B cell (primary cell): ENCODE measurements at regions of chr5 and their contacts with region 1.

Region 1: GRCh38 chr5:79612667-79613198 is 492 bp downstream of the TENT2 start:
- DNase-seq: no peak
- ATAC-seq: no peak
- H3K4me3 ChIP-seq: peak overlapping the region; percentile 93 to 98 (median 96)
- H3K4me3 Mint-ChIP-seq: peak overlapping the region; percentile 95
- H3K27ac ChIP-seq: peak overlapping the region; percentile 95 to 99
- H3K27ac Mint-ChIP-seq: peak overlapping the region; percentile 96
- H3K4me1 ChIP-seq: peaks cover 16 to 21% of the 10 kb centered on the region in 2 donors
- H3K4me1 Mint-ChIP-seq: peaks cover 36% of the 10 kb centered on the region
- H3K27me3 ChIP-seq: no peaks in the 10 kb centered on the region
- H3K27me3 Mint-ChIP-seq: no peaks in the 10 kb centered on the region
- CTCF ChIP-seq: no peak

Region 2: GRCh38 chr5:77775790-77776553 is 1836.8 kb before region 1 on chr5 and contains the start of gene TBCA:
- CTCF ChIA-PET with region 1: no interaction called
- POLR2A ChIA-PET with region 1: no interaction called
- intact Hi-C with region 1: loop called (anchors 5 kb)
- DNase-seq: peak; percentile 98
- ATAC-seq: peak; percentile 85
- H3K4me3 ChIP-seq: peak within 1 kb of the TSS; percentile 55 to 96 (median 74)
- H3K4me3 Mint-ChIP-seq: peak within 1 kb of the TSS; percentile 90
- H3K27ac ChIP-seq: peak within 1 kb of the TSS; percentile 93 to 98
- H3K27ac Mint-ChIP-seq: peak within 1 kb of the TSS; percentile 98
- H3K4me1 ChIP-seq: peaks cover 19 to 22% of the 10 kb centered on the region in 2 donors
- H3K4me1 Mint-ChIP-seq: peaks cover 35% of the 10 kb centered on the region
- H3K27me3 ChIP-seq: no peaks in the 10 kb centered on the region
- H3K27me3 Mint-ChIP-seq: no peaks in the 10 kb centered on the region
- CTCF ChIP-seq: peak; percentile 42
- total RNA-seq, gene TBCA: 94.8 and 110 TPM in 2 replicates

Region 3: GRCh38 chr5:78359831-78360673 is 1252.7 kb before region 1 on chr5 and contains the start of gene SCAMP1:
- CTCF ChIA-PET with region 1: no interaction called
- POLR2A ChIA-PET with region 1: no interaction called
- intact Hi-C with region 1: loop called (anchors 2 kb)
- DNase-seq: peak; percentile 97
- ATAC-seq: peak; percentile 87
- H3K4me3 ChIP-seq: peak within 1 kb of the TSS; percentile 67 to 99 (median 88)
- H3K4me3 Mint-ChIP-seq: peak within 1 kb of the TSS; percentile 93
- H3K27ac ChIP-seq: peak within 1 kb of the TSS; percentile 81 to 85
- H3K27ac Mint-ChIP-seq: peak within 1 kb of the TSS; percentile 90
- H3K4me1 ChIP-seq: peaks cover 20 to 22% of the 10 kb centered on the region in 2 donors
- H3K4me1 Mint-ChIP-seq: peaks cover 37% of the 10 kb centered on the region
- H3K27me3 ChIP-seq: no peaks in the 10 kb centered on the region
- H3K27me3 Mint-ChIP-seq: no peaks in the 10 kb centered on the region
- CTCF ChIP-seq: peak; percentile 18
- total RNA-seq, gene SCAMP1: 18.4 and 25.4 TPM in 2 replicates

Region 4: GRCh38 chr5:79653843-79654242 is 41.1 kb after region 1 on chr5:
- CTCF ChIA-PET with region 1: no interaction called
- POLR2A ChIA-PET with region 1: no interaction called
- intact Hi-C with region 1: no loop called
- DNase-seq: no peak
- ATAC-seq: no peak
- H3K4me3 ChIP-seq: no peak overlapping the region
- H3K4me3 Mint-ChIP-seq: no peak overlapping the region
- H3K27ac ChIP-seq: no peak overlapping the region
- H3K27ac Mint-ChIP-seq: no peak overlapping the region
- H3K4me1 ChIP-seq: no peaks in the 10 kb centered on the region
- H3K4me1 Mint-ChIP-seq: no peaks in the 10 kb centered on the region
- H3K27me3 ChIP-seq: no peaks in the 10 kb centered on the region
- H3K27me3 Mint-ChIP-seq: no peaks in the 10 kb centered on the region
- CTCF ChIP-seq: no peak

Region 5: GRCh38 chr5:79990598-79991507 is 378.1 kb after region 1 on chr5 and contains the start of gene MTX3:
- CTCF ChIA-PET with region 1: no interaction called
- POLR2A ChIA-PET with region 1: no interaction called
- intact Hi-C with region 1: loop called (anchors 2 kb)
- DNase-seq: peak; percentile 89
- ATAC-seq: peak; percentile 96
- H3K4me3 ChIP-seq: peak within 1 kb of the TSS; percentile 71 to 90 (median 78)
- H3K4me3 Mint-ChIP-seq: peak within 1 kb of the TSS; percentile 81
- H3K27ac ChIP-seq: peak within 1 kb of the TSS; percentile 65 to 70
- H3K27ac Mint-ChIP-seq: peak within 1 kb of the TSS; percentile 91
- H3K4me1 ChIP-seq: peaks cover 16% of the 10 kb centered on the region in 2 donors
- H3K4me1 Mint-ChIP-seq: peaks cover 17% of the 10 kb centered on the region
- H3K27me3 ChIP-seq: no peaks in the 10 kb centered on the region
- H3K27me3 Mint-ChIP-seq: peaks cover 9% of the 10 kb centered on the region
- CTCF ChIP-seq: no peak
- total RNA-seq, gene MTX3: 21.0 and 22.0 TPM in 2 replicates

Region 6: DNA sequence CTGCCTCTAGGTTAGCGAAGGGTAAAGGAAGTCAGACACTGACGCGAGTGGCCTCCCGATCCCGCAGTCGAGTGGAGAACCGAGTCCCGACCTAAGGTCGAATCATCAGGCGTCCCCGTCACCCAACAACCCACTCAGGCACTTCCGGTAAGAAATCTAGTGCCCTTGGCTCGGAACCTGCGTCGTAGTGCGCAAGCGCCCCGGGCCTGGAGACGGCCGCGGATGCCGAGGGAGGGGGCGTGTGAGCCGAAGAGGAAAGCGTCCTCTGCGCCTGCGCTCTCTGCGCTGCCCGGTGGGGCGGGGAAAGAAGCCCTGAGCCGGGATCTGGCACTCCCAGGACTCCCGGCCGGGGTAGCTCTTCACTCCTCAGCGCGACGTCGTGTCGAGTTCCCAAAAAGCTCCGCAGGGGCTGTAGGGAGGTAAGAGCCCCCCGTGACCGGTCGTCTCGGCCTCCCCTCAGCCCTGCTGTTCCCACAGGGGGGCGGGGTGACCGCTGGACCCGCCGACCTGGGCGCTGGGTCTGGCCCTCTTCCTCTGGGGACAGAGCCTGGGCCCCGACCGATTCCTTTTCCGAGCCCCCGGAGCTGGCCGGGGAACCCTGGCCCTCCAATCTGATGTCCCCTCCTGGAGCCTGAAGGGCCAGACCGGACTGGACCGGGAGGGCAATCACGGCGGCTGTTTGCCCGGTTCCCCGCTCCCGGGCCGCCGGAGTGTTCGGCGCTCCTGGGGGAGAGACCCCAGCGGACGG is 795.2 kb after region 1 on chr5 and contains the start of gene ZFYVE16:
- CTCF ChIA-PET with region 1: no interaction called
- POLR2A ChIA-PET with region 1: no interaction called
- intact Hi-C with region 1: loop called (anchors 2 kb)
- DNase-seq: peak; percentile 98
- ATAC-seq: peak; percentile 84
- H3K4me3 ChIP-seq: peak within 1 kb of the TSS; percentile 87 to 99 (median 92)
- H3K4me3 Mint-ChIP-seq: peak within 1 kb of the TSS; percentile 97
- H3K27ac ChIP-seq: peak within 1 kb of the TSS; percentile 84 to 95
- H3K27ac Mint-ChIP-seq: peak within 1 kb of the TSS; percentile 99
- H3K4me1 ChIP-seq: peaks cover 13 to 17% of the 10 kb centered on the region in 2 donors
- H3K4me1 Mint-ChIP-seq: peaks cover 20% of the 10 kb centered on the region
- H3K27me3 ChIP-seq: no peaks in the 10 kb centered on the region
- H3K27me3 Mint-ChIP-seq: no peaks in the 10 kb centered on the region
- CTCF ChIP-seq: peak; percentile 18
- total RNA-seq, gene ZFYVE16: 38.3 and 44.4 TPM in 2 replicates

Region 7: GRCh38 chr5:80852331-80853245 is 1239.9 kb after region 1 on chr5:
- CTCF ChIA-PET with region 1: no interaction called
- POLR2A ChIA-PET with region 1: no interaction called
- intact Hi-C with region 1: no loop called
- DNase-seq: no peak
- ATAC-seq: no peak
- H3K4me3 ChIP-seq: no peak overlapping the region
- H3K4me3 Mint-ChIP-seq: no peak overlapping the region
- H3K27ac ChIP-seq: no peak overlapping the region
- H3K27ac Mint-ChIP-seq: no peak overlapping the region
- H3K4me1 ChIP-seq: no peaks in the 10 kb centered on the region
- H3K4me1 Mint-ChIP-seq: no peaks in the 10 kb centered on the region
- H3K27me3 ChIP-seq: no peaks in the 10 kb centered on the region
- H3K27me3 Mint-ChIP-seq: no peaks in the 10 kb centered on the region
- CTCF ChIP-seq: no peak